ENCODE measurements at regions of chr9 and their contacts with region 1.

Region 1: GRCh38 chr9:77899679-77900354 is 131.8 kb downstream of the GNAQ start:
- DNase-seq: no peak

Region 2: DNA sequence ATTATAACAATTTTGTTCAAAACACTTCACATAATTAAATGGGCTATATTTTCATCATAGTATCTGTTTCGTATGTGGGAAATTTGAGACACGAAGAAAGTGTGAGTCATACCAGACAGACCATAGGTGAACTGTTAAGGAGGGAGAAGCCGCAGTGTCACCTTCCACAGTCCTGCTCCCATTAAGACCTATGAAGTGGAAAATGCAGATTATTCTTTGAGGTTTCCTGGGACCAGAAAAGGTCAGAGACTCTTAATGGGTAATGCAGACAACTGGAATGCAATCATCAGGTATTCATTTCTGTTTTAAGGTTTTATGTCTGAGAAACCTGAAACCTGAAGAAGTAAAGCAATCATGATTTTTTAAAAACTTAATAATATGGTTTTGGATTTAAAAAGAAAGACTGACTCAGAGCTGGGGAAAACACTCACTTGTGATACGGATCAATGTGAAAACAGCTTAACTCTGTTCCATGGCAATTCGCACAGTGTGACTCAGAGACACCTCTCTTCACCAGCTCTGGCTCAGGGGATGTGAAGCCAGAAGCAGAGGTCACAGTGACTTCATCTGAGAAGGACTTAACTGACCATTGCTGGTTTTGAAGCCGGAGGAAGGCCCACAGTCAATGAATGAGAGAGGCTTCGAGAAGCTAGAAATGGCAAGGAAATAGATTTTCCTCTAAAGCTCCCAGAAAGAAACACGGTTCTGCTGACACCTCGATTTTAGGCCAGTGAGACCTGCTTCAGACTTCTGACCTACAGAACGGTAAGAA is 1458.1 kb before region 1 on chr9:
- intact Hi-C with region 1: no loop called
- DNase-seq: no peak

Region 3: DNA sequence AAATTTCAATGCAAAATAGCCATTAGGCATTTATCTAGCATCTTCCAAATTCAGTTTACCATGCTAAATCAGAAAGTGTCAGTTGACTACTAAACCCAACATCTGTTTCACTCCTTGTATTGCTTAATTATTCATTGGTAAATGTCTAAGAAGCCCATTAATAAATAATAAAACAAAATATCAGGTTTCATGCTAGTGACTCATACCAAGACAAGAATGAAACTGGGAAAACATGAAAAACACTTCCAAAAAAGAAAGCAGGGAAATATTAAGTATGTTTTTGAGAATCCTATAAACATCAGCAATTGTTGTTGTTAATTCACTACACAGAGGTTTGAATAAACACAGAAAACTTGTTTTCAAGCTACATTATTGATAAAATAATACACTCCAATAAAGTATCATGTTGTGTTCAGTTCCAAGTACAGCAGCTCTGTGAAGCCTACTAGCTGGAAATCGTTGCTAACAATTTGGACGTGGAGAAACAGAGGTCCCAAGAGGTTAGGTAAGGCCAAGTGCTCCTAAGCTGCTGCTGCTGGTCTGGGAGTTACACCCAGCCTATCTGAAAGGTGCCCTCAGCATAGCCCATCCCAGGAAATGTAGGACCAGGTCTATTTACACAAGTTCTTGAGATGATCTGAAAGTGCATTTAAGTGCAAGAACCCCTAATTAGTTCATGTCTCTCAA is 53.0 kb after region 1 on chr9:
- intact Hi-C with region 1: loop called in 1 of 2 experiments (anchors 10 kb)
- DNase-seq: no peak